ENCODE measurements at regions of chr2 and their contacts with region 1.

Region 1: DNA sequence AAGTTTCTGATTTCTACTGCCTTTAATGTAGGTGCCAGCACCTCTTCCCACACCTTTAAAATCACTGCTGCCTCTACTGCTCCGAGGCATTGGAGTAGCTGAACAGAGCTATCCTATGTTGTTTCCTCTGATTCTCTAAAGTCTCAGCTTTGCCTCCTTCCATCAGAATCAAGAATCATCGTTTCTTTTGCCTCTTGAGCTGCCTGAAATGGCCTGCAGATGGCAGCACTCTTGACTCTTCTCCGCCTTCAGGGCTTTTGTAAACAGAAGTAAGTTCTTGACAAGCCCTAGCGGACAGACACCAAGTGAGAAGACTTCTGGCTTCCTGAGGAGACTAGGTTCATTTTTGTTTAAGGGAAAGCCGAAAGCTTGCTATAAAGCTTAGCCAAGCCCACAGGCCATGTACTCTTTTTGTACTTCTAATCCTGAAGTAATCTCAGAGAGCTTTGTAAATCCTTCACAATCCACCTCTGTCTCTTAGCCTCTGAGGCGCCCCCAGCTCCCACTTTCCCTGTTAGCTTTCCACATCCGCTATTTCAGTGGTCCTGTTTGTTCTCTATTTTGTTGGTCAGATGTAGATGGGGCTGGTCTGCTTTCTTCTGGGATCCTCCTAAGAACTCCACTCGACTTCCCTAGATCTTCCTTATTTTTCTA is 48.4 kb downstream of the GTF3C3 start:
- DNase-seq: peak; percentile 78
- H3K4me3 Mint-ChIP-seq: no peak overlapping the region
- H3K27ac Mint-ChIP-seq: no peak overlapping the region
- H3K4me1 Mint-ChIP-seq: peaks cover 9% of the 10 kb centered on the region
- H3K27me3 Mint-ChIP-seq: no peaks in the 10 kb centered on the region

Region 2: DNA sequence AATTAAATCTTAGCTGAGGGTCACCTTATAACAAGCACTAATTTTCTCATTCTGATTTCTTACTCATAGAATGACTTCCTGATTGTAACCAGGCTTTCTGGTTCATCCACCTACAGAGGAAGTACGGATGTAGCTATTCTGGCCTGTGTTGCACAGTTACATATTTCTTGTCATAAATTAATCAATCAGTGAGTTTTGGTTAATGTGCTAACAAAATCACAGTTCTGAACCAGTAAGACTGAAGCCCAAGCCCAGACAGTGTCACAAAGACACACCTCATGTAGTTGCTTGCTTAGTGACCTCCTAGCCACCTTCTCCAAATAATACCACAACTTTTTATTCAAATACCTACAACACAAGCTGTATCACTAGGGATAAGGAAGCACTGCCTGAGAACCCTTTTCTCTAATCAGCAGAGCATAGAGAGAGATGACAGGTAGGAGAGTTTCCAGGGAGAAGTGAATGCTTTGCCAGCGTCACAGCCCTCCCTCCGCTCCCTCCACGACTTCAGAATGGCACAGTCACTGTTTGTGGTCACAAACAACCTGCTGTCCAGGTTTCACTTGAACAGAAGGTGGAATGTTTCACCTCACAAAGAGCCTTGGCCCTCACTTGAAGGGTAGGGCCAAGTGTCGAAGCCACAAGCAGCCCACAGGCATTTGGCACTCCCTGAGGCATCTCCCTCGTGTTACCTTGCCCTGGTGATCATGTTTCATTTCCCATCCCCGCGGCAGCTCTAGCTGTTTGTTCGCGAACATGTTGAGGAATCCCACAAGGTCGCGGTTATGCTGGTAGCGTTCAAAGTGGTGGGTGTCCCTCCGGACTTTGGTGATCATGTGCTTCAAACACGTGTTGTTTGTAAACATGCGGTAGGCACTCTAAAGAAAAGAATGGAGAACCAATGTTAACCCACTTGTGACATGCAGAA is 459.0 kb before region 1 on chr2:
- CTCF ChIA-PET with region 1: no interaction called
- POLR2A ChIA-PET with region 1: no interaction called
- intact Hi-C with region 1: loop called (anchors 10 kb)
- DNase-seq: no peak
- H3K4me3 Mint-ChIP-seq: peak overlapping the region; percentile 10
- H3K27ac Mint-ChIP-seq: no peak overlapping the region
- H3K4me1 Mint-ChIP-seq: peaks cover 49% of the 10 kb centered on the region
- H3K27me3 Mint-ChIP-seq: no peaks in the 10 kb centered on the region

Region 3: GRCh38 chr2:196618661-196619060 is 132.4 kb before region 1 on chr2:
- CTCF ChIA-PET with region 1: no interaction called
- POLR2A ChIA-PET with region 1: no interaction called
- intact Hi-C with region 1: no loop called
- DNase-seq: no peak
- H3K4me3 Mint-ChIP-seq: no peak overlapping the region
- H3K27ac Mint-ChIP-seq: no peak overlapping the region
- H3K4me1 Mint-ChIP-seq: no peaks in the 10 kb centered on the region
- H3K27me3 Mint-ChIP-seq: peaks cover 8% of the 10 kb centered on the region

Region 4: GRCh38 chr2:196725882-196726281 is 25.2 kb before region 1 on chr2:
- CTCF ChIA-PET with region 1: interaction called, 12 read pairs
- POLR2A ChIA-PET with region 1: interaction called, 3 read pairs
- intact Hi-C with region 1: no loop called
- DNase-seq: peak; percentile 16
- H3K4me3 Mint-ChIP-seq: no peak overlapping the region
- H3K27ac Mint-ChIP-seq: no peak overlapping the region
- H3K4me1 Mint-ChIP-seq: peaks cover 7% of the 10 kb centered on the region
- H3K27me3 Mint-ChIP-seq: no peaks in the 10 kb centered on the region

Region 5: GRCh38 chr2:196792865-196793264 is 41.8 kb after region 1 on chr2:
- CTCF ChIA-PET with region 1: interaction called, 11 read pairs
- POLR2A ChIA-PET with region 1: no interaction called
- intact Hi-C with region 1: no loop called
- DNase-seq: no peak
- H3K4me3 Mint-ChIP-seq: no peak overlapping the region
- H3K27ac Mint-ChIP-seq: no peak overlapping the region
- H3K4me1 Mint-ChIP-seq: peaks cover 22% of the 10 kb centered on the region
- H3K27me3 Mint-ChIP-seq: no peaks in the 10 kb centered on the region

Region 6: GRCh38 chr2:196821195-196821594 is 70.1 kb after region 1 on chr2:
- CTCF ChIA-PET with region 1: no interaction called
- POLR2A ChIA-PET with region 1: no interaction called
- intact Hi-C with region 1: no loop called
- DNase-seq: no peak
- H3K4me3 Mint-ChIP-seq: no peak overlapping the region
- H3K27ac Mint-ChIP-seq: no peak overlapping the region
- H3K4me1 Mint-ChIP-seq: no peaks in the 10 kb centered on the region
- H3K27me3 Mint-ChIP-seq: peaks cover 16% of the 10 kb centered on the region

Region 7: GRCh38 chr2:197378494-197379307 is 627.6 kb after region 1 on chr2:
- CTCF ChIA-PET with region 1: no interaction called
- POLR2A ChIA-PET with region 1: interaction called, 3 read pairs
- intact Hi-C with region 1: loop called (anchors 2 kb)
- DNase-seq: peak; percentile 72
- H3K4me3 Mint-ChIP-seq: no peak overlapping the region
- H3K27ac Mint-ChIP-seq: no peak overlapping the region
- H3K4me1 Mint-ChIP-seq: peaks cover 15% of the 10 kb centered on the region
- H3K27me3 Mint-ChIP-seq: peaks cover 4% of the 10 kb centered on the region

Region 8: DNA sequence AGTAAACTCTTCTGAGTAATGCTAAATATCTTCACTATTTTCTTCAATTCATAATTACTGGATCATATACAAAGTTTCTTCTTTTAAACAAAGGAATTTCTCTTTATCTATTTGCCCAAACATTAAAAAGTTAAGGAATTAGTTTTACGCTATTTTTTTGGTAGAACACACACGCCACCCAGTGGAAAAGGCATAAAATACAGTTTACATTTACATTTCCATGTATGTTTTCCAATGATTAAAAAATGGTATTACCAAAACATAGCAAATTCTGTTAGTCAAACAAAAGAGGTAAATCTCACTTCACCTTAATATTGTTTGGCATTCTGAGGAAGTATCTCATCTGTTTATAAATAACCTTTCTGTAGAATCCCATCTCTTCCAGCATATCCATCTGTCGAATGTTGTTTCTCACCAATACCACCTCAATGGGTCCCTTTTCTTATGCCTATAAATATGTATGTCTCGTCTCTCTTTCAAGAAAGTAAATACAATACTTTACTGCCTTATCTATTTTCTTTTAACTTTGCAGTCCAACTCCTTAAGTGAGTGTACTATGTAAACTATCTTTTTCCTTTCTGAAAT is 1026.8 kb after region 1 on chr2:
- CTCF ChIA-PET with region 1: interaction called, 5 read pairs
- POLR2A ChIA-PET with region 1: no interaction called
- intact Hi-C with region 1: loop called (anchors 10 kb)
- DNase-seq: no peak
- H3K4me3 Mint-ChIP-seq: no peak overlapping the region
- H3K27ac Mint-ChIP-seq: no peak overlapping the region
- H3K4me1 Mint-ChIP-seq: no peaks in the 10 kb centered on the region
- H3K27me3 Mint-ChIP-seq: peaks cover 5% of the 10 kb centered on the region

Measured in activated CD4-positive, alpha-beta memory T cell treated with anti-CD3 and anti-CD28 coated beads for 36 hours (primary cell).